ENCODE measurements at regions of chr17 and their contacts with region 1.

Region 1: GRCh38 chr17:50200457-50201275 is 765 bp downstream of the COL1A1 start:
- DNase-seq: peak; percentile 94 to 98
- ATAC-seq: peak; percentile 91
- H3K4me3 ChIP-seq: peak overlapping the region; percentile 24 to 56
- H3K27ac ChIP-seq: peak overlapping the region; percentile 71 to 87
- H3K4me1 ChIP-seq: no peaks in the 10 kb centered on the region
- H3K27me3 ChIP-seq: no peaks in the 10 kb centered on the region

Region 2: DNA sequence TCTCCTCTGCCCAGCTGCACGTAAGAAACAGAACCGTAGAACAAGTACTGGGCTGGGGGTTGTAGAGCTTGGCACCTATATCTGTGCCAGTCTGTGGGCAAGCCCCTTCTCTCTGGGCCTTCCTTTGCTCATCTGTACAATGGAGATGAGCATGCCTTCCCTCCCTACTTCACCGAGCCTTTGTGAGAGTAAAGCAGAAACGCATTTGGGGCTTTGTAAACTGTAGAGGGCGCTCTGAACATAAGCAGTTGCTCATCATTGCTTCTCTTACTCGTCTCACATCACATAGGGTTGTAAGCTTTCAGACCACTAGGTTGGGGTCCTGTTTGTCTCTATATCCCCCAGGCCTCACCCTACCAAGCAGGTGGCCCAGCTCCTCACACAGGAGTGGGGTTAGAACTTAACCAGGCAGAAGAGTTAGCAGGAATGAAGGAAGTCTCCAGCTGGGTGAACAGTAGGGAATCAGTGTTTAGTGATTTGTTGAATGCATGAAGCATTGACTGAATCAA is 85.8 kb before region 1 on chr17:
- intact Hi-C with region 1: loop called in 1 of 2 experiments (anchors 5 kb)
- DNase-seq: no peak
- ATAC-seq: no peak
- H3K4me3 ChIP-seq: no peak overlapping the region
- H3K27ac ChIP-seq: no peak overlapping the region
- H3K4me1 ChIP-seq: peaks cover 0 to 4% of the 10 kb centered on the region in 2 donors
- H3K27me3 ChIP-seq: no peaks in the 10 kb centered on the region

Region 3: GRCh38 chr17:50169121-50169764 is 31.4 kb before region 1 on chr17:
- intact Hi-C with region 1: loop called in 1 of 2 experiments (anchors 1 kb)
- DNase-seq: peak; percentile 63 to 77
- ATAC-seq: peak; percentile 71
- H3K4me3 ChIP-seq: no peak overlapping the region
- H3K27ac ChIP-seq: peak overlapping the region in 1 of 2 donors; percentile 30
- H3K4me1 ChIP-seq: no peaks in the 10 kb centered on the region
- H3K27me3 ChIP-seq: no peaks in the 10 kb centered on the region

Region 4: GRCh38 chr17:50266303-50267073 is 65.8 kb after region 1 on chr17:
- intact Hi-C with region 1: loop called in 1 of 2 experiments (anchors 1 kb)
- DNase-seq: peak; percentile 87 to 88
- ATAC-seq: peak; percentile 69
- H3K4me3 ChIP-seq: no peak overlapping the region
- H3K27ac ChIP-seq: no peak overlapping the region
- H3K4me1 ChIP-seq: peaks cover 0 to 3% of the 10 kb centered on the region in 2 donors
- H3K27me3 ChIP-seq: no peaks in the 10 kb centered on the region

Region 5: DNA sequence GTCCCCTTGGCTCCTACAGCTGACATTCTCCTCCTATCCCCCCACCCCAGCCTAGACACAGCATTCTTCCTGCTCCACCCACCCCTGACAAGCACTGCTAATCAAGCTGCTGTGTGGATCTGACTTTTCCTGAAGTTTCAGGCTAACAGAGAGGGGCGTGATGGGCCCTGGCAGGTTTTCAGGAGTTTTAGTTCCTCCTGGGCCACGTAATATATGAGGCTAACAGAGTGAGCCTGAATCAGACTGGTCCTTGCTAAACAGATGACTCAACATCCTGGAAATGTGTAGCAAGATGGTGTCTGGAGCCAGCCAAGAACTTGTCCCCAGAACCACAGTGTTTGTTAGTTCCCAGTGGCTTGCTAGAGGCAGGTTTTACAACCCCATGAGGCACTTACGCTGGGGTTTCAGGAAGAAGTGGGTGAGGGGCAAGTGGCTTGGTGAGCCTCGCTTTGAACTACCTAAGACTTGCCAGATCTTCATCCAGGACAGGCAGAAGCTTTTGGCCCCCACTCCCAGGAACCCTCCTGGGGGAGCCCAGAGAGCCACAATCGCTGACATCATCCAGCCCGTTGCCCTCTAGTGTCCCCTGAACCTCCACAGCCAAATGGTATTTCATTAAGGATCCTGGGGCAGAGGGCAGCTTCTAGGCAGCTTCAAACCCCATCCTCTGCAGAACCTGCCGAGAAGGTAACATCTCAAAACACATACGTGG is 89.5 kb after region 1 on chr17:
- intact Hi-C with region 1: loop called in 1 of 2 experiments (anchors 1 kb)
- DNase-seq: peak; percentile 90
- ATAC-seq: peak; percentile 95
- H3K4me3 ChIP-seq: peak overlapping the region; percentile 6 to 29
- H3K27ac ChIP-seq: peak overlapping the region; percentile 96
- H3K4me1 ChIP-seq: no peaks in the 10 kb centered on the region
- H3K27me3 ChIP-seq: no peaks in the 10 kb centered on the region

Region 6: GRCh38 chr17:50348522-50349242 is 148.0 kb after region 1 on chr17:
- intact Hi-C with region 1: no loop called
- DNase-seq: peak in 1 of 2 donors; percentile 68
- ATAC-seq: no peak
- H3K4me3 ChIP-seq: no peak overlapping the region
- H3K27ac ChIP-seq: no peak overlapping the region
- H3K4me1 ChIP-seq: no peaks in the 10 kb centered on the region
- H3K27me3 ChIP-seq: no peaks in the 10 kb centered on the region